ENCODE measurements at regions of chr2 and their contacts with region 1.

Region 1: GRCh38 chr2:70340921-70341765 is 39.3 kb upstream of the FAM136A start:
- DNase-seq: no peak
- H3K4me3 ChIP-seq: no peak overlapping the region
- H3K27me3 ChIP-seq: no peaks in the 10 kb centered on the region
- CTCF ChIP-seq: peak; percentile 82

Region 2: GRCh38 chr2:70301344-70302194 is 39.6 kb before region 1 on chr2 and contains the start of gene FAM136A:
- CTCF ChIA-PET with region 1: interaction called, 10 read pairs
- POLR2A ChIA-PET with region 1: no interaction called
- DNase-seq: no peak
- H3K4me3 ChIP-seq: peak within 1 kb of the TSS; percentile 97
- H3K27me3 ChIP-seq: no peaks in the 10 kb centered on the region
- CTCF ChIP-seq: peak; percentile 87
- polyA plus RNA-seq, gene FAM136A: 22.9 and 28.3 TPM in 2 replicates

Region 3: GRCh38 chr2:70328921-70329561 is 12.1 kb before region 1 on chr2:
- CTCF ChIA-PET with region 1: interaction called, 30 read pairs
- POLR2A ChIA-PET with region 1: no interaction called
- DNase-seq: no peak
- H3K4me3 ChIP-seq: no peak overlapping the region
- H3K27me3 ChIP-seq: no peaks in the 10 kb centered on the region; the same call in 1 of the 2 replicates
- CTCF ChIP-seq: no peak

Region 4: GRCh38 chr2:70616168-70616694 is 275.1 kb after region 1 on chr2:
- CTCF ChIA-PET with region 1: interaction called, 131 read pairs
- POLR2A ChIA-PET with region 1: no interaction called
- DNase-seq: no peak
- H3K4me3 ChIP-seq: no peak overlapping the region
- H3K27me3 ChIP-seq: peaks cover 5% of the 10 kb centered on the region
- CTCF ChIP-seq: no peak

Region 5: DNA sequence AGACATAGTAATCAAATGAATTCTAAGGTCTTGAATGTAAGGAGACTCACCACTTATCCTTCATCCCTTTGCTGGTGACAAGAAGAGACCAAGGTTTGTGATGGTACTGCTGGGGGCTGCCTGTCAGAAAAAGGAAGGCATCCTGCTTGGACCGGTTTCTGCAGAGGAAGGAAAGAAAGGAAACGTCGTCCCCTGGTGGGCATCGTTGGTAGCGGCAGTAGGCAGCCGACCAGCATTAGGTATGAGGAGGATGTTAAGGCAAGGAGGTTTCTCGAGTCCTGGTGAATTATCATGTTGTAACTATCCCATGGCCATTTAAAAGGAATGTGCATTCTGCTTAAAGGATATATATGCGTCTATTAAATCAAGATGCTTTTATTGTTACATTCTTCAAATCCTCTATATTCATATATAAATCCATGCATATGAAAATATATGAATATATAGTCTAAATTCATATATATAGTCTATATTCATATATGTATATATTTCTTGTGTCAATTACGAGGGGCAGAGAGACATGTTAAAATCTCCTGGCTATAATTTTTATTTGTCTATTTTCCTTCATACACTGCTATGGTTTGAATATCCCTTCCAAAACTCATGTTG is 306.8 kb after region 1 on chr2:
- CTCF ChIA-PET with region 1: interaction called, 27 read pairs
- POLR2A ChIA-PET with region 1: no interaction called
- DNase-seq: peak; percentile 3
- H3K4me3 ChIP-seq: no peak overlapping the region
- H3K27me3 ChIP-seq: no peaks in the 10 kb centered on the region
- CTCF ChIP-seq: peak; percentile 100

Measured in BJ (cell line).